ENCODE measurements at regions of chr5 and their contacts with region 1.

Region 1: GRCh38 chr5:39302472-39302871 is 61.8 kb downstream of the C9 start:
- DNase-seq: no peak
- H3K4me3 ChIP-seq: no peak overlapping the region
- H3K27ac ChIP-seq: no peak overlapping the region
- H3K4me1 ChIP-seq: no peaks in the 10 kb centered on the region
- H3K27me3 ChIP-seq: no peaks in the 10 kb centered on the region
- CTCF ChIP-seq: no peak

Region 2: DNA sequence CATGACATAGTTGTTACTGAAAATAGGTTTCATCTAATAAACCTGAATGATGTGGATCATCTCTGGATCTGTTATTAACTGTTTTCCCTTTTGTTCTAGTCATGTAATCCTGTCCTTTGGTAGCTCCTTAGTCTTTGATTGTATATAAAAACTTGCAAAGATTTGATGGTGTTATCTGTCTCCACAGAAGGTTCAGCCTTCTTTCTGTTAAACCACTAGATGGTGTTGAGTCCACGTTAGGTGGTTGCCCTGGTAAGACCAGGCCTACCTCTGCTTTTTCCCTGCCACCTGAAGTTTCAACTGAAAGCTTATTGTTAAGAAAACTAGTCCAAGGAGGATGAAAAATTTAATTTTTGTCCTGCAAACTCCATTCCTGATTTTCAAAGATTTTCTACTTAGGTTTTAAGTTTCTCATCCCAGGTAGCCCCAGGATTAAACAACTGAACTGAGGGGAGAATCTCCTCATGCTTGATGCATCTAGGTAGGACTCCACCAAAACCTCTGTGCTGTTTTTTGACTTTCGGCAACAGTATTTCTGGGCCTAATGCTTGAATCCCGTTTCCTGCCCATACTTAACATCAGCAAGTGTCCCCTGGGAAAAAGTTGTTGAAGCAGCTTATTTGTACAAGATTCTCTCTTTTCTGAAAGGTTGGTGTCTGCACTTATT is 296.8 kb before region 1 on chr5:
- CTCF ChIA-PET with region 1: no interaction called
- POLR2A ChIA-PET with region 1: interaction called, 12 read pairs
- intact Hi-C with region 1: no loop called
- DNase-seq: no peak
- H3K4me3 ChIP-seq: no peak overlapping the region
- H3K27ac ChIP-seq: no peak overlapping the region
- H3K4me1 ChIP-seq: no peaks in the 10 kb centered on the region
- H3K27me3 ChIP-seq: no peaks in the 10 kb centered on the region
- CTCF ChIP-seq: peak; percentile 42; the same call in 1 of the 2 replicates

Region 3: DNA sequence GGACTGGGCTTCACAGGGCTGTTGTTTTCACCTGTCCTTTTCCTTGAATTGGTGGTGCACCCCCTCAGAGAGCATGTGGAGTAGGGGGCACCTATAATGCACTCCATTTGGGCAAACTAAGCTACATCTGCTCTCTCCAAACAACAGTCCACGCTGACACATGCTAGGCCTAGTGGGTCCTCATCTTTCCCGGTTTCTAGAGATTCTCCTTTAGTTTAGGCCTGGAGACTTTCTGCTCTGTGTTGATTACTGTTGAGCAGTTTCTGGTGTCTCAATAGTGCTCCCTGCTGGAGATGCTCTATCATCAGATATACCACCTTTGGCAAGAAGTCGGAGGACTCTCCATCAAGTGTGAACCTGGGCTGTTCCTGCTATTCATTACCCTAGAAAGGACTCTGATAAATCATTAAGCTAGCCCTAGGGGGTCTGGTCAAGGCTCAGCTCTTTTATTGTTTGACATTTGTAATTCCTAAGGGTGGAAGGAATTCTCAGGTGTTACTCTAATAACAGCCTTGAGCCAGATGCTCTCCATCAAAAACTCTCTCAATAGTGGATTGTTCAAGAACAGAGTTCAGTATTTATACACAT is 19.1 kb before region 1 on chr5:
- CTCF ChIA-PET with region 1: no interaction called
- POLR2A ChIA-PET with region 1: no interaction called
- intact Hi-C with region 1: no loop called
- DNase-seq: peak; percentile 61 to 64
- H3K4me3 ChIP-seq: no peak overlapping the region
- H3K27ac ChIP-seq: no peak overlapping the region
- H3K4me1 ChIP-seq: no peaks in the 10 kb centered on the region
- H3K27me3 ChIP-seq: no peaks in the 10 kb centered on the region
- CTCF ChIP-seq: peak; percentile 91